Sigmoid colon (tissue), 7 donors: ENCODE measurements at regions of chr2 and their contacts with region 1.

Region 1: DNA sequence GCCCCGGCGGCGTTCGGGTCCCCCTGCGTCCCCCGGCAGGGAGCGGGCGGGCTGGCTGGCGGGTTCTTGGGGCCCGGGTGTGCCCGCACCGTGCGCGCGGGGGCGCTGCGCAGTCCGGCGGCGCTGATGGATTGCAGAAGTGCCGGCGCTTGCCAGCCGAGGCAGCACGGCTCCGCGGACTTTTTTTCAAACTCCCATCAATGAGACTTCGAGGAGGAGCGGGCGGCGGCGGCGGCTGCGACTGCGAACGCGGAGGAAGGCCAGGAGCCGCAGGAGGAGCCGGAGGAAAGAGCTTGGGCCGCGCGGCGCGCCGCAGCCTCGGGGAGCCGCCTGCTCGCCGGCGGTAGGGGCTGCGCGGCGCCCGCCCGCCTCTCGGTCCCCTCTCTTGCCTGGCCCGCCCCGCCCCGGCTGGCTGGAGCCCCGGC is at the start of gene GLI2:
- DNase-seq: peak; percentile 89
- H3K4me3 ChIP-seq: peak within 1 kb of the TSS; percentile 48 to 62 (median 59)
- H3K27ac ChIP-seq: peak within 1 kb of the TSS; percentile 87 to 95 (median 90)
- H3K4me1 ChIP-seq: peaks cover 0 to 50% (median 44%) of the 10 kb centered on the region in 4 donors
- H3K27me3 ChIP-seq: peaks cover 0 to 15% (median 0%) of the 10 kb centered on the region in 3 donors
- CTCF ChIP-seq: peak in 3 of 4 experiments; percentile 24 to 75 (median 35)
- EP300 ChIP-seq: no peak
- POLR2A ChIP-seq: no peak
- total RNA-seq, gene GLI2: 2.1 to 6.4 (median 2.9) TPM

Region 2: DNA sequence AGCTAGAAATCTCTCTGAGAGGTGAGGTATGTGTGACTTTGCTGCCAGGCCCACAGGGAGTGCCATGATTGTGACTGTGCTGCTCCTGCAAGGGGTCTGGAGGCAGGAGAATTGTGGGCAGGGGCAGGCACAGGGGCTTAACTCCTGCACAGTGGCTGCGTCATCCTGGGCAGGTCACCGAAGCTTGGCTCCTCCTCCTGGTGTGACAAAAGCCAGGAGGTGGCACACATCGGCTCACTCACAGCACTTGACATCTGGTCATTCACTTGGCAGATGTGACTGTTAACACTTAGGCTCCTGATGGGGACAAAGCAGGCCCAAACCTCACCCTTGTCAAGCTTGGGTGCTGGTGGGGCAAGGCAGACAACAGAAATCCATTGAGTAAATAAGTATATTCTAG is 36.5 kb before region 1 on chr2:
- intact Hi-C with region 1: loop called (anchors 5 kb)
- DNase-seq: no peak
- H3K4me3 ChIP-seq: no peak overlapping the region
- H3K27ac ChIP-seq: no peak overlapping the region
- H3K4me1 ChIP-seq: peaks cover 0 to 10% (median 5%) of the 10 kb centered on the region in 4 donors
- H3K27me3 ChIP-seq: peaks cover 0 to 5% (median 0%) of the 10 kb centered on the region in 3 donors
- CTCF ChIP-seq: no peak
- EP300 ChIP-seq: no peak
- POLR2A ChIP-seq: no peak

Region 3: DNA sequence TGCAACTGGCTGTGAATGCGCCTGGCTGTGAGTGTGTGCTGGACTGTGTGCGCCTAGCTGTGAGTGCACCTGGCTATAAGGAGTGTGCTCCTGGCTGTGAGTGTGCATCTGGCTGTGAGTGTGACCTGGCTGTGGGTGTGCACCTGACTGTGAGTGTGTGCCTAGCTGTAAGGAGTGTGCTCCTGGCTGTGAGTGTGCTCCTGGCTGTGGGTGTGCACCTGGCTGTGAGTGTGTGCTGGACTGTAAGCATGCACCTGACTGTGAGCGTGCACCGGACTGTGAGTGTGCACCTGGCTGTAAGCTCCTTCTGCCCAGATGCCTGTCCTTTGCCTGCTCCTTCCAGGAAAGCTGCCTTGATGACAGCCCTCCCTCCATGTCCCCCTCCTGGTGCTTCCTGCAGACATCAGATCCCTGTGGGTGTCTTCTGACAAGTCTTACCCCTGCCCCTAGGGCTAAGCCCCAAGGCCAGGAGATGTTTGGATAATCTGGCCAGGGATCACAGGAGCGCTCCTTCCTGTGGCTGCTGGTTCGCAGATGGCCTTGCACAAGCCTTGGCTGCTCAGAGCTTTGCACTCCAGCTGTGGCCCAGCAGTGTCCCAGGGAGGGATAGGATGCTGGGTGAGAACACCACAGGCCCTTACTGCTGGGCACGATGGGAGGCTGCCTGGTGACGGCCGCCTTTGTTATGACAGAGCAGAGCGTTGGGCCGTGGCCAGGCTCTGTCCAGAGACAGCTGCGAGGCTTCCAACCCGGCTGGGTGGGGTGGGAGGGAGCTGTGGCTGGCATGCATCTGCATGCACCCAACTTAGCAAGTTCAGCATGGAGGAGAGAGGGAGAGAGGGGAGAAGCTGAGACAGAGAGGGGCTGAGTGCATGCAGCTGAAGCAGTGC is 89.9 kb after region 1 on chr2:
- intact Hi-C with region 1: loop called (anchors 2 kb)
- DNase-seq: peak; percentile 90
- H3K4me3 ChIP-seq: no peak overlapping the region
- H3K27ac ChIP-seq: peak overlapping the region; percentile 56 to 83 (median 79)
- H3K4me1 ChIP-seq: peaks cover 0 to 60% (median 44%) of the 10 kb centered on the region in 4 donors
- H3K27me3 ChIP-seq: no peaks in the 10 kb centered on the region
- CTCF ChIP-seq: no peak
- EP300 ChIP-seq: no peak
- POLR2A ChIP-seq: no peak

Region 4: DNA sequence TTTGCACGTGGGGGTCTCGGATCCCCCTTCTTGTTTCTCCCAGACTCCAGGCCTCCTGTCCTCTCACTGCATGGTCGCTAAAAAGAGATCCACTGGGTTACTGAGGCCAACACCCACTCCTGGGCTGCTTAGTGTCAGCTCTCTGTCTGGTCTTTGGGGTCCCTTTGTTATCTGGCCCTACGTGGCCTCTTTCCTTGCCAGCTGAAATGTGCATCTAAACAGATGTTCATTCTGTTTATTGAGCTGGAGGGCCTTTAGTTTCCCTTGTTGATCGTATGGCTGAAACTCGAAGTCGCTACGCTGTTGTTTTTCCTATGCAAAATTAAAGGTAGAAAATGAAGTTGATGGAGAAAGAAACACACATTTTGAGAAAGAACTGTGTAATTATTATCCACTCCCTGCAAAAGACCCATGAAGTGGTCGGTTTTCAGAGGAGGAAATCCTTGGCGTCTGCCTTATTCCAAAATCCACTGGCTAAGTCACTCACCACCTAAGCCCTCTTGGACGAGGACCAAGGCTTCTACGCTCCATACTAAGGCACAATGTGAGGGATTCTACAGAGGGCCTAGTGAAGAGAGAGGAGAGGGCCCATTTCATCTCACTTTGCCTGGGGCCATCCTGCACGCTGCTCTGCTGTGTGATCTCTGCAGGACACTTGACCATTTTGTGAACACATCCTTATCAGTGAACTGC is 105.2 kb after region 1 on chr2:
- intact Hi-C with region 1: no loop called
- DNase-seq: peak; percentile 9
- H3K4me3 ChIP-seq: no peak overlapping the region
- H3K27ac ChIP-seq: no peak overlapping the region
- H3K4me1 ChIP-seq: peaks cover 0 to 12% (median 0%) of the 10 kb centered on the region in 4 donors
- H3K27me3 ChIP-seq: no peaks in the 10 kb centered on the region
- CTCF ChIP-seq: no peak
- EP300 ChIP-seq: no peak
- POLR2A ChIP-seq: no peak

Region 5: DNA sequence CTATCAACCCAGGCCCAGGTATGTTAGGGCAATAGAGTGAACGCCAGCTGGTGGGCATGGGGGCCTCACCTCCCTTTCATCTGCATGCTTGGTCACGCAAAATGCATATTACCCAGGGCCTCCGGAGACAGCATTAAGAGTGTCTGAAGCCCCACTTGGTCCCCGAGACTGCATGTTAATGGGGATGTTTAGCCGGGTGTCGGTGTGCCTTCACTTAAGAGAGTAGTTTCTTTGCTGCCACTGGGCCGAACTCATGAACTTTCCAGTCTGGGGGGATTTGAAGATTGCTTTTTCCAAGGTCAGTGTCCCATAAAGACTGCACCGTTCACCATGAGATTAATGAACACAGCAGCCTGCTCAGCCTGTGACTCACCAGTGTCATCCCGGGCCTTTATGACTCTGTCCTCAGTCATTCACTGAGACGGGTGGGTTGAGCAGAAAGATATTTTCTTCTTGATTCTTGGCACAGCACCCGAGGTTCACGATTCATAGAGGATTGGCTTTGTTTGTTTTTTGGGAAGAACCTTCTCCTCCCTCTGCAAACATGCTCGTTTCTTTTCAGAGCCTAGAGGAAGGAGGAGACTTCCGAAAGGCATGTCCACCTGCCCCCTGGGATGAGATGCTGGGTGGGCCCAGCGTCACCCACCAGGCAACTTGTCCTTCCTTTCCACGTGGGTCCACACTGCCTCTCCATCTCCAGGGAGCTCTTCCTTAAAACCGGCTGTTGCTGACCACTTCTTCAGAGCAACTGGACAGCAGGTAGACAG is 199.0 kb after region 1 on chr2:
- intact Hi-C with region 1: loop called (anchors 5 kb)
- DNase-seq: no peak
- H3K4me3 ChIP-seq: no peak overlapping the region
- H3K27ac ChIP-seq: peak overlapping the region; percentile 76 to 81 (median 79)
- H3K4me1 ChIP-seq: peaks cover 0 to 60% (median 58%) of the 10 kb centered on the region in 4 donors
- H3K27me3 ChIP-seq: no peaks in the 10 kb centered on the region
- CTCF ChIP-seq: no peak
- EP300 ChIP-seq: no peak
- POLR2A ChIP-seq: no peak

Region 6: DNA sequence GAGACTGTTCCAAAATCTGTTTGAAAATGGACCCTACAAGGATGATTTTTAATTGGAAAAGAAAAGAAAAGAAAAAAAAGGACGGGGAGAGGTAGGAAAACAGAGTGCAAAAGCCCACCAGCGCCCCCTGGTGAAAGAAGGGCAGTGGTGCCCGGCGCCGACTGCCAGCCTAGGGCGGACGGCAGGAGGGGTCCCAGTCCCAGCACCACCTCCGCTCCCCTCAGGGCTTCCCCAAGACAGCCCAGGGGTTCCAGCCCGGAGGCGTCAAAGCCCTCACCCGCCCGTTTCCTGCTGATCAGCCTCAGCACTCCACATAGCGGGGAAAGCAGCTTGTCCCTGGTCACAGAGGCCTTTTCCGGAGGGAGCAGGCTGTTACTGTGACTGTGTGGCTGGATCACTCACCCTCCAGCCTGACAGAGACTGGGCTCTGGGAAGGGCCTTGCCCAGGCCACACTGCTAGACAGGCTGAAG is 335.3 kb after region 1 on chr2:
- intact Hi-C with region 1: loop called (anchors 2 kb)
- DNase-seq: peak; percentile 77
- H3K4me3 ChIP-seq: no peak overlapping the region
- H3K27ac ChIP-seq: no peak overlapping the region
- H3K4me1 ChIP-seq: peaks cover 0 to 30% (median 23%) of the 10 kb centered on the region in 4 donors
- H3K27me3 ChIP-seq: peaks cover 0 to 3% (median 0%) of the 10 kb centered on the region in 3 donors
- CTCF ChIP-seq: peak; percentile 78 to 96 (median 91)
- EP300 ChIP-seq: no peak
- POLR2A ChIP-seq: no peak